Heart right ventricle (tissue), 16 donors: ENCODE measurements at regions of chr2 and their contacts with region 1.

Region 1: DNA sequence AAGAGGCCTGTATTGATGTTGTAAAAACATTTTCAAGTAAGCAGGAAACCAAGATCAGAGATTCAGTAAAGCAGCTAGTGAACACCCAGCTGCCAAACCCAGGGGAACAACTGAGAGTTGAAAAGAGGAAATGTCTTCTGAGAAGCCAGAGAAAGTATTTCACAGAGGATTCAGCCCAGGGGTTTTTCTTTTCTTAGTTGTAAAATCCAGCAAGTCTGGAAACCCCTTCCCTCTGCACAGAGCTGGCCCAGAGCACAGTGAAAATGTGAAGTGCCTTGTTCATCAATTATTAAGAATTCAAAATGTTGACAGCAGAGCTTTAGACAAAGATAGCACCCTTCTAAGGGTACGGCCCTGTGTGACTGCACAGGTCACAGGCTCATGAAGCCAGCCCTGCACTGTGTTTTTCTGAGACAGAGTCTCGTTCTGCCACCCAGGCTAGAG is 28.4 kb downstream of the AFF3 start:
- DNase-seq: no peak
- ATAC-seq: no peak
- H3K4me3 ChIP-seq: no peak overlapping the region
- H3K27ac ChIP-seq: no peak overlapping the region
- H3K4me1 ChIP-seq: no peaks in the 10 kb centered on the region
- H3K27me3 ChIP-seq: peaks cover 0 to 15% (median 0%) of the 10 kb centered on the region in 7 donors
- CTCF ChIP-seq: no peak

Region 2: GRCh38 chr2:100235098-100235497 is 121.1 kb after region 1 on chr2:
- intact Hi-C with region 1: loop called in 2 of 10 experiments (anchors 10 kb)
- DNase-seq: no peak
- ATAC-seq: no peak
- H3K4me3 ChIP-seq: no peak overlapping the region
- H3K27ac ChIP-seq: no peak overlapping the region
- H3K4me1 ChIP-seq: no peaks in the 10 kb centered on the region
- H3K27me3 ChIP-seq: no peaks in the 10 kb centered on the region
- CTCF ChIP-seq: no peak